Dendritic cell treated with granulocyte-macrophage colony-stimulating factor and Interleukin-4, amounts not matched to agents 40 ng/mL and 50 ng/mL, for 4 days (primary cell): ENCODE measurements at regions of chr3 and their contacts with region 1.

Region 1: GRCh38 chr3:38227989-38228388 is 37.6 kb upstream of the SLC22A13 start:
- H3K4me3 Mint-ChIP-seq: no peak overlapping the region
- H3K27ac Mint-ChIP-seq: no peak overlapping the region
- H3K4me1 Mint-ChIP-seq: peaks cover 32% of the 10 kb centered on the region
- H3K27me3 Mint-ChIP-seq: no peaks in the 10 kb centered on the region

Region 2: DNA sequence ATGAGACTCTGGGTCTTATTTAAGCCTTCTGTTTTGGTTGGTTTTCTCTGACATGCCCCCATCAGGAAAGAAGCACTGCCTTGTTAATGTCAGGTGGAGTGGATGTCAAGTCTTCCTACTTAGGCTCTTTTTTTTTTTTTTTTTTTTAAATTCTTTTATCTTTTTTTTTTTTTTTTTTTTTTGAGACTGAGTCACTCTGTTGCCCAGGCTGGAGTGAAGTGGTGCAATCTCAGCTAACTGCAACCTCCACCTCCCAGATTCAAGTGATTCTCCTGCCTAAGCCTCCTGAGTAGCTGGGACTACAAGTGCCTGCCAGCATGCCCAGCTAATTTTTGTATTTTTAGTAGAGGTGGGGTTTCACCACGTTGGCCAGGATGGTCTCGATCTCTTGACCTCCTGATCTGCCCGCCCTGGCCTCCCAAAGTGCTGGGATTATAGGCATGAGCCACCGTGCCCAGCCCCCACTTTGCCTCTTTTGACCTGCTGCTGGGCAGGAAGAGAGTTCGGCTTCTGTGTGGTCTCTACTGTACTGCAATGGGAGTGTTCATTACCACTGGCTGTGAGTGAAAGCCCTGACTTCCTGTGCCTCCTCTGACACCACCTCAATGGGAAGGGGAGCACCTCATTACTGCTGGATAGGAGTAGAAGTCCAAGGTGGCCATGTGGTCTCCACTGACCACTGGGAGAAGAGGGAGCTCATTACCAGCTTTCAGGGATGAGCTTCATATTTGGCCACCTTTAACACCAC is 355.4 kb before region 1 on chr3:
- intact Hi-C with region 1: no loop called
- H3K4me3 Mint-ChIP-seq: no peak overlapping the region
- H3K27ac Mint-ChIP-seq: no peak overlapping the region
- H3K4me1 Mint-ChIP-seq: peaks cover 7% of the 10 kb centered on the region
- H3K27me3 Mint-ChIP-seq: no peaks in the 10 kb centered on the region

Region 3: GRCh38 chr3:38117748-38118420 is 110.1 kb before region 1 on chr3:
- intact Hi-C with region 1: loop called (anchors 5 kb)
- H3K4me3 Mint-ChIP-seq: no peak overlapping the region
- H3K27ac Mint-ChIP-seq: no peak overlapping the region
- H3K4me1 Mint-ChIP-seq: peaks cover 5% of the 10 kb centered on the region
- H3K27me3 Mint-ChIP-seq: no peaks in the 10 kb centered on the region

Region 4: DNA sequence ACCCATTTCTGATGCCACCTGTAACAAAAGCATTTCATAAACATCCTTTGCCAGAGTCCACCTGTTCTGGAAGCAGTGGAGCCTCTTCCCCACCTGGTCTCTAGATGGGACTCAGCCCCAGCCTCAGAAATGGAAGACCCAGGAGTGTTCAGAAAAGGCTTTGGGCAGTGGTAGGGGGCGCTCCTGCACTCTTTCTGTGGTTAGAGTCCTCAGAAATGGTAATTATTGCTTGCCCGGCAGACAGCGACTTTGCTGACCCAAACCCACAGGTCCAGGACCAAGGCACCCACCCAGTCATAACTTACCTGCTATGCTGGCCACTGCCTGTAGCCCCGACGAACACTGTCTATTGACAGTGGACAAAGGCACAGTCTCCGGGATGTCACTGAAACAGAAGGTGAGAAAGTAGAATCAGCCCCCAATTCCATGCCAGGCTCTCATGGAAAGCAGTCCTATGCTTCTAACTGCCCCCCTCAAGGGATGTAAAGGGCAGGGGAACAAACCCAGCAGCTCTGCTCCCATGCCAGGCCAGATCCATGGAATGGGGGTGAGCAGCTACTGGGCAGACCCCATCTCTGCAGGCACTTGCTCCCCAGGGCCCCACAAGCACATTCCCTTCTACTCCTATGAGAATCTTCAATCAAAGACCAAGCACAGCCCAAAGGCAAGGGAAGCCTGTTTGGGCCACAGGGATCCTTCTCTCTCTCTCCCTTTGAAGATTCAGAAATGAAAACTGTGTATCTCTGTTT is 96.2 kb before region 1 on chr3:
- intact Hi-C with region 1: loop called (anchors 5 kb)
- H3K4me3 Mint-ChIP-seq: no peak overlapping the region
- H3K27ac Mint-ChIP-seq: no peak overlapping the region
- H3K4me1 Mint-ChIP-seq: peaks cover 80% of the 10 kb centered on the region
- H3K27me3 Mint-ChIP-seq: no peaks in the 10 kb centered on the region